ENCODE measurements at regions of chr5 and their contacts with region 1.

Region 1: DNA sequence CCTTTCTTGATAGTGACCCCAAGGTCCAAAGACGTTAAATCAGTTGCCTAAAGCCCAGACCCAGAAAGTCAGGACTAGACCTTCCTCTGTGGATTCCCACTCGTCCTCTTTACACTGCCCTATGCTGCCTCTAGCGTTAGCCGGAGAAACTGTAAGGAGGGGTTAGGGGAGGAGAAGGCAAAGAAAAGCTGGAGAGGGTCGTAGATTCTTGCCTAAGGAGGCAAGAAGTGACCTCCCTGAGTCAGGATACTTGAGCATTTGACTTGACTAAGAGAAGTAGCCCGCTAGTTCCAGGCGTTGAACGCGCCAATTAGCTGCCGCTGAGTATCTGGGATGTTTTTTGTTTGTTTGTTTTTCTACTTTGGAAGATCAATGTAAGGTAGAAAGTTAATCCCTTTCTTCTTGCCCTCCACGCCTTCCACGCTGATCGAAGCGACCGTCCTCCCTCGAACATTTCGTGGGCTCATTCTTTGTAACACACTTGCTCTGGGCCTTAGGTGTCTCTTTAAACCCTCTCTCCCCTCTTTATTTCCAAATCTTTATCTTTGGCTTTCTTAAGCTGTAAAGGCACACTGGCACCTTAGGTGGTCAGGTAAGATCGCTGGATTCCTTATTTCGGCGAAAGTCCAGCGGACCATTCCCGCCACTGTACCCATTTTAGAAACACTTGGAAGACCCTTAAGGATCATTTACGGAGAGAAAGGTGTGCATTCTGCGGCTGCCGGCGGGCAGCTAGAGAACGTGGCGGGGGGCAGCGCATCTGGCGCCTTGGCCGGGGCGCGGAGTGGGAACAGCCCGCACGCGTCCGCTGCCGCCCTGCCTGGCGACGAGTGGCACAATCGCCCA is 5.1 kb upstream of the RGMB start:
- DNase-seq: peak in 5 of 9 experiments; percentile 8 to 61 (median 34)
- ATAC-seq: no peak
- H3K4me3 ChIP-seq: peak overlapping the region; percentile 43 to 61
- H3K4me3 Mint-ChIP-seq: peak overlapping the region; percentile 93
- H3K27ac ChIP-seq: no peak overlapping the region
- H3K27ac Mint-ChIP-seq: no peak overlapping the region
- H3K4me1 ChIP-seq: peaks cover 36% of the 10 kb centered on the region
- H3K4me1 Mint-ChIP-seq: peaks cover 42% of the 10 kb centered on the region
- H3K27me3 ChIP-seq: peaks cover 3 to 23% of the 10 kb centered on the region in 2 experiments
- H3K27me3 Mint-ChIP-seq: peaks cover 38% of the 10 kb centered on the region
- CTCF ChIP-seq: peak; percentile 40

Region 2: DNA sequence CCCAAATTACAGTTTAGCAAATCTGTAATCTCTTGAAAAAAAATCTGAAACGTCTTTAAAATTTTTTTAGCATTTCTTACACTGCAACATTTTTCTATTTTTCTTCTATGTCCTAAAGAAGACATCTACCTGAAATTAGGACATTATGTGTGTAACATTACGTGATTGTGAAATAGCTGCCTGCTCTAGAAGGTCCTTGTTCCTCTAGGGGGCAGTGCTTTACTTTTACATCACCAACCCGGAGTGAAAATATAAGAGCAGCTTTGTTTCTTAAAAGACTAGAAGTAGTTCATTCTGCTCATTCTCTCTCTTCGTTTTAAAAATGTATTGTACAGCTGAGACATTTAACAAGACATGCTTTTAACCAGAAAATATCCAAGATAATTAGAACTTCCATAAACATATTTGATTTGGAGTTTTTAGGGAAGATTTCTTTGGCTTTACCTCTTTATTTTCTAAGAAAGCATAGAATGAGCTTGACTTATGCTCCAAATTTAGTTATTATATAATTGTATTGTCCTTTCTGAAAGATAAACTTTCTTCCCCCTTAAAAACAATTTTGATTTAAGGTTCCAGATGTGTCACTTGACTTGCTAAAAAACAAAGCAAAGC is 1537.3 kb before region 1 on chr5:
- CTCF ChIA-PET with region 1: interaction called, 5 read pairs
- POLR2A ChIA-PET with region 1: no interaction called
- intact Hi-C with region 1: loop called in 1 of 2 experiments (anchors 1 kb)
- DNase-seq: peak in 3 of 9 experiments; percentile 13 to 62 (median 53)
- ATAC-seq: no peak
- H3K4me3 ChIP-seq: no peak overlapping the region
- H3K4me3 Mint-ChIP-seq: no peak overlapping the region
- H3K27ac ChIP-seq: no peak overlapping the region
- H3K27ac Mint-ChIP-seq: no peak overlapping the region
- H3K4me1 ChIP-seq: no peaks in the 10 kb centered on the region
- H3K4me1 Mint-ChIP-seq: no peaks in the 10 kb centered on the region
- H3K27me3 ChIP-seq: no peaks in the 10 kb centered on the region
- H3K27me3 Mint-ChIP-seq: peaks cover 2% of the 10 kb centered on the region
- CTCF ChIP-seq: peak; percentile 85

Region 3: DNA sequence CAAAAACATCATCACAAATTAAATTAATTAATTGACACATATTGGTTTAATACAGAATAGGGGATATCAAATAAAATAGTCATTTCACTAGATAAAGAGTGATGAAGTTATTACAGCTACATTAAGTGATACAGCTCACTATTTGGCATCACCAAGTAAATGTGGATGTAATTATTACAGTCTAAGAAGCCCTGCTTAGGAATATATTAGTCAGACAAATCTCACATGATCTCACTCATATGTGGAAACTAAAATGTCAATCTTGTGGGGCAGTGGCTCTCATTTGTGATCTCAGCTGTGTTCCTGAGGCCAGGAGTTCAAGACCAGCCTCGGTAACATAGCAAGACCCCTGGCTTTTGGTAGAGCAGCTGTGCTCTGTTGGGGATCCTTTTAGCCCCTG is 228.3 kb before region 1 on chr5:
- CTCF ChIA-PET with region 1: no interaction called
- POLR2A ChIA-PET with region 1: no interaction called
- intact Hi-C with region 1: no loop called
- DNase-seq: no peak
- ATAC-seq: no peak
- H3K4me3 ChIP-seq: no peak overlapping the region
- H3K4me3 Mint-ChIP-seq: no peak overlapping the region
- H3K27ac ChIP-seq: no peak overlapping the region
- H3K27ac Mint-ChIP-seq: no peak overlapping the region
- H3K4me1 ChIP-seq: no peaks in the 10 kb centered on the region
- H3K4me1 Mint-ChIP-seq: no peaks in the 10 kb centered on the region
- H3K27me3 ChIP-seq: no peaks in the 10 kb centered on the region
- H3K27me3 Mint-ChIP-seq: no peaks in the 10 kb centered on the region
- CTCF ChIP-seq: no peak

Region 4: GRCh38 chr5:98750693-98751092 is 17.7 kb before region 1 on chr5:
- CTCF ChIA-PET with region 1: interaction called, 36 read pairs
- POLR2A ChIA-PET with region 1: no interaction called
- intact Hi-C with region 1: loop called (anchors 1 kb)
- DNase-seq: peak in 1 of 9 experiments; percentile 9
- ATAC-seq: peak; percentile 34
- H3K4me3 ChIP-seq: no peak overlapping the region
- H3K4me3 Mint-ChIP-seq: no peak overlapping the region
- H3K27ac ChIP-seq: no peak overlapping the region
- H3K27ac Mint-ChIP-seq: no peak overlapping the region
- H3K4me1 ChIP-seq: no peaks in the 10 kb centered on the region
- H3K4me1 Mint-ChIP-seq: no peaks in the 10 kb centered on the region
- H3K27me3 ChIP-seq: no peaks in the 10 kb centered on the region
- H3K27me3 Mint-ChIP-seq: peaks cover 9% of the 10 kb centered on the region
- CTCF ChIP-seq: peak; percentile 23

Region 5: DNA sequence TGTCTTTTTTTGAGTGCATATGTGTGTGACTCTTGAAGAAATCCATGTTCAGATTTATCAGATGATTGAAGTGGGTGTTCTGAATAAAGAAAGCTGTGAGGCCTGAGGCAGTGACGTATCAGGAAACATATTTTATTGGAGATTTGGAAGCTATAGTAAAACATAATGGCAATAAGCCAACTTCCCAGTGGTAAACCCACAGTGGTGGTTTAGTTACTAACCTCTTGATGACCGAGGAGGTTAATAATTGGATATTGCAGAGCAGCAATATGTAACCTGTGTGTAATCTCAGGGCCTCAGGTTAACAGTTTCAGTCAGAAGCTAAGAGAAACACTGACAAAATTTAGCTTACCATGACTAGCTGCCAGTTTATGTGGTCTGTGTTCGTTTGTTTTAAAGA is 12.0 kb after region 1 on chr5:
- CTCF ChIA-PET with region 1: interaction called, 17 read pairs
- POLR2A ChIA-PET with region 1: interaction called, 4 read pairs
- intact Hi-C with region 1: no loop called
- DNase-seq: no peak
- ATAC-seq: no peak
- H3K4me3 ChIP-seq: no peak overlapping the region
- H3K4me3 Mint-ChIP-seq: no peak overlapping the region
- H3K27ac ChIP-seq: no peak overlapping the region
- H3K27ac Mint-ChIP-seq: no peak overlapping the region
- H3K4me1 ChIP-seq: peaks cover 3% of the 10 kb centered on the region
- H3K4me1 Mint-ChIP-seq: peaks cover 15% of the 10 kb centered on the region
- H3K27me3 ChIP-seq: no peaks in the 10 kb centered on the region
- H3K27me3 Mint-ChIP-seq: peaks cover 23% of the 10 kb centered on the region
- CTCF ChIP-seq: no peak

Region 6: DNA sequence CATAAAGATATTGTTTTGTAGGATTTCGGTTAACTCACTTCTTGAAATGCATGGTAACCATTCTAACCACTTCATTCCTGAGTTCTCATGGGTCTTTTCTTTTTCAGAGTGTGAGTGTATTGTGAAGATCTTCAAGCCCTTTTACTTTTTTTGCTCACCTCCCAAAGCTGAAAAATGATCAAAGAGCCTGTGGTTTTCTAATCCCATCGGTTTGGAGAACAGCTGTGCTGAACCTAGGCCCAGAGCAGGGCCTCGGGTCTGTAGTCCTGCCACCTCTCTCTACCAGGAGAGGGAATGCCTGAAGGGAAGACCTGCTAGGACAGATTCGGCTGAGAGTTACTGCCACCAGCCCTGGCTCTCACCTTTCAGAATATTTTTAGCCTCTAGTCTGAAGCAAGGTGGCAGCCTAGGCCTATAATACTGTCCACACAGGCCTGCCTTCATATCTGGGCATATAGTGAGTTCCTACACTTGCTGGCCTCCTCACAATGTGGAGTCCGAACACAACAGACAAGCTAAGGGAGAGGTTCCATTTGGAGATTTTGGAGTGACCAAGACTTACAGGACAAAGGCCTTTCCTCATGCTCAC is 18.8 kb after region 1 on chr5:
- CTCF ChIA-PET with region 1: interaction called, 11 read pairs
- POLR2A ChIA-PET with region 1: interaction called, 4 read pairs
- intact Hi-C with region 1: no loop called
- DNase-seq: no peak
- ATAC-seq: no peak
- H3K4me3 ChIP-seq: no peak overlapping the region
- H3K4me3 Mint-ChIP-seq: no peak overlapping the region
- H3K27ac ChIP-seq: no peak overlapping the region
- H3K27ac Mint-ChIP-seq: no peak overlapping the region
- H3K4me1 ChIP-seq: no peaks in the 10 kb centered on the region
- H3K4me1 Mint-ChIP-seq: peaks cover 10% of the 10 kb centered on the region
- H3K27me3 ChIP-seq: no peaks in the 10 kb centered on the region
- H3K27me3 Mint-ChIP-seq: peaks cover 9% of the 10 kb centered on the region
- CTCF ChIP-seq: no peak

Region 7: GRCh38 chr5:98796197-98796972 is 28.0 kb after region 1 on chr5:
- CTCF ChIA-PET with region 1: interaction called, 41 read pairs
- POLR2A ChIA-PET with region 1: interaction called, 5 read pairs
- intact Hi-C with region 1: no loop called
- DNase-seq: peak in 7 of 9 experiments; percentile 17 to 62 (median 42)
- ATAC-seq: peak; percentile 62
- H3K4me3 ChIP-seq: no peak overlapping the region
- H3K4me3 Mint-ChIP-seq: no peak overlapping the region
- H3K27ac ChIP-seq: no peak overlapping the region
- H3K27ac Mint-ChIP-seq: no peak overlapping the region
- H3K4me1 ChIP-seq: no peaks in the 10 kb centered on the region
- H3K4me1 Mint-ChIP-seq: no peaks in the 10 kb centered on the region
- H3K27me3 ChIP-seq: no peaks in the 10 kb centered on the region
- H3K27me3 Mint-ChIP-seq: peaks cover 5% of the 10 kb centered on the region
- CTCF ChIP-seq: peak; percentile 78

Measured in CD8-positive, alpha-beta T cell (primary cell).